ENCODE measurements at regions of chr22 and their contacts with region 1.

Region 1: GRCh38 chr22:20885557-20886323 is 26.9 kb downstream of the SNAP29 start:
- DNase-seq: peak; percentile 89
- ATAC-seq: peak; percentile 98
- H3K4me3 Mint-ChIP-seq: no peak overlapping the region
- H3K27ac Mint-ChIP-seq: peak overlapping the region; percentile 68
- H3K4me1 Mint-ChIP-seq: peaks cover 3% of the 10 kb centered on the region; the same call in 1 of the 2 replicates
- H3K27me3 Mint-ChIP-seq: no peaks in the 10 kb centered on the region
- CTCF ChIP-seq: peak; percentile 71

Region 2: GRCh38 chr22:20725987-20726558 is 159.7 kb before region 1 on chr22:
- CTCF ChIA-PET with region 1: no interaction called
- POLR2A ChIA-PET with region 1: no interaction called
- DNase-seq: no peak
- ATAC-seq: no peak
- H3K4me3 Mint-ChIP-seq: no peak overlapping the region
- H3K27ac Mint-ChIP-seq: no peak overlapping the region
- H3K4me1 Mint-ChIP-seq: no peaks in the 10 kb centered on the region
- H3K27me3 Mint-ChIP-seq: no peaks in the 10 kb centered on the region
- CTCF ChIP-seq: no peak

Region 3: GRCh38 chr22:20867179-20868024 is 18.3 kb before region 1 on chr22:
- CTCF ChIA-PET with region 1: interaction called, 19 read pairs
- POLR2A ChIA-PET with region 1: no interaction called
- DNase-seq: no peak
- ATAC-seq: no peak
- H3K4me3 Mint-ChIP-seq: no peak overlapping the region
- H3K27ac Mint-ChIP-seq: no peak overlapping the region
- H3K4me1 Mint-ChIP-seq: no peaks in the 10 kb centered on the region
- H3K27me3 Mint-ChIP-seq: no peaks in the 10 kb centered on the region
- CTCF ChIP-seq: no peak

Region 4: DNA sequence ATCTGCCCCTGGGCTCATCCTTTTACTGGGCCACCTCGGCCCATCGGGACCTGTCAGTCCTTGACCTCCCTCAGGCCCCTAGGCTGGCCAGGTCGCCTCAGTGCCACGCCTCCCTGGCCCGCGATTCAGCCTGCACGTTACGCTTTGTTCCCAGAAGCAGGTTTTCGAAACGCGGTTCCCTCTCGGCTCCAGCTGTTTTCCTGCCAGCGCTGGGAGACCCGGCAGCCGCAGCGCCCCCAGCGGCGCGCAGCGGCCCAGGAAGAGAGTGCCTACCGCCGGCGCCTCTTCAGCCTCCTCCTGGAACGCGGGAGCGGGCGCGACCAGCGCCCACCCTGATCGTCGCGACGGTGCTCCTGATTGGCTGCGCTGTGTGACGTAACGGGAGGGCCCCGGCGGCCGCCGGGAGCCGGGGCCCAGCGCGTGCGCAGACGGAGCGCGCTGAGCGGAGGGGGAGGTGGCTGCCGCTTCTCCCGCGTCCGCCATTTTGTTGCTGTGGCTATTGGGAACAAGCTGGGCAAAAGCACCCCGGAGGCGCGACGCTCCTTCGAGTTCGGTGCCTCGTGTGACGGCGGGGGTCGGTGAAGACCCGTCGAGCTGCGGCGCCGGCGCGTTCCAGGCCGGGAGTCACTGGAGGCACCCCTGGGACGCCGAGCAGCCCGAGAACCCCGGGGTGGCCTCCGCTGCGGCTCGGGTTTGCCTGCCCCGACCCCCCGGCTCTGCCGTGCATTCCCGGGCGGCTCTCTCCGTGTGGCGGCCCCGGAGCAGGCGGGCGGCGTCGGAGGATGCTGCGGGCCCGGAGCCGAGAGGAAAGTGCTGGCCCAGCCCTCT is 31.5 kb after region 1 on chr22 and contains the start of gene CRKL:
- CTCF ChIA-PET with region 1: interaction called, 34 read pairs
- POLR2A ChIA-PET with region 1: no interaction called
- DNase-seq: peak; percentile 97
- ATAC-seq: peak; percentile 98
- H3K4me3 Mint-ChIP-seq: peak within 1 kb of the TSS; percentile 95
- H3K27ac Mint-ChIP-seq: peak within 1 kb of the TSS; percentile 99
- H3K4me1 Mint-ChIP-seq: peaks cover 28% of the 10 kb centered on the region
- H3K27me3 Mint-ChIP-seq: no peaks in the 10 kb centered on the region; the same call in 1 of the 2 replicates
- CTCF ChIP-seq: peak; percentile 79
- total RNA-seq, gene CRKL: 113 to 115 TPM (median 114 TPM) in 3 replicates

Region 5: GRCh38 chr22:20957316-20958101 is 71.8 kb after region 1 on chr22:
- CTCF ChIA-PET with region 1: interaction called, 72 read pairs
- POLR2A ChIA-PET with region 1: interaction called, 3 read pairs
- DNase-seq: peak; percentile 58
- ATAC-seq: peak; percentile 74
- H3K4me3 Mint-ChIP-seq: peak overlapping the region; percentile 74
- H3K27ac Mint-ChIP-seq: no peak overlapping the region
- H3K4me1 Mint-ChIP-seq: peaks cover 12% of the 10 kb centered on the region
- H3K27me3 Mint-ChIP-seq: peaks cover 18% of the 10 kb centered on the region
- CTCF ChIP-seq: no peak

Region 6: GRCh38 chr22:21020802-21021429 is 135.2 kb after region 1 on chr22:
- CTCF ChIA-PET with region 1: interaction called, 10 read pairs
- POLR2A ChIA-PET with region 1: no interaction called
- DNase-seq: peak; percentile 68
- ATAC-seq: peak; percentile 95
- H3K4me3 Mint-ChIP-seq: no peak overlapping the region
- H3K27ac Mint-ChIP-seq: no peak overlapping the region
- H3K4me1 Mint-ChIP-seq: no peaks in the 10 kb centered on the region
- H3K27me3 Mint-ChIP-seq: peaks cover 14% of the 10 kb centered on the region
- CTCF ChIP-seq: peak; percentile 52; the same call in 1 of the 2 replicates

Measured in WTC11 (cell line).